ENCODE measurements at regions of chr1 and their contacts with region 1.

Region 1: DNA sequence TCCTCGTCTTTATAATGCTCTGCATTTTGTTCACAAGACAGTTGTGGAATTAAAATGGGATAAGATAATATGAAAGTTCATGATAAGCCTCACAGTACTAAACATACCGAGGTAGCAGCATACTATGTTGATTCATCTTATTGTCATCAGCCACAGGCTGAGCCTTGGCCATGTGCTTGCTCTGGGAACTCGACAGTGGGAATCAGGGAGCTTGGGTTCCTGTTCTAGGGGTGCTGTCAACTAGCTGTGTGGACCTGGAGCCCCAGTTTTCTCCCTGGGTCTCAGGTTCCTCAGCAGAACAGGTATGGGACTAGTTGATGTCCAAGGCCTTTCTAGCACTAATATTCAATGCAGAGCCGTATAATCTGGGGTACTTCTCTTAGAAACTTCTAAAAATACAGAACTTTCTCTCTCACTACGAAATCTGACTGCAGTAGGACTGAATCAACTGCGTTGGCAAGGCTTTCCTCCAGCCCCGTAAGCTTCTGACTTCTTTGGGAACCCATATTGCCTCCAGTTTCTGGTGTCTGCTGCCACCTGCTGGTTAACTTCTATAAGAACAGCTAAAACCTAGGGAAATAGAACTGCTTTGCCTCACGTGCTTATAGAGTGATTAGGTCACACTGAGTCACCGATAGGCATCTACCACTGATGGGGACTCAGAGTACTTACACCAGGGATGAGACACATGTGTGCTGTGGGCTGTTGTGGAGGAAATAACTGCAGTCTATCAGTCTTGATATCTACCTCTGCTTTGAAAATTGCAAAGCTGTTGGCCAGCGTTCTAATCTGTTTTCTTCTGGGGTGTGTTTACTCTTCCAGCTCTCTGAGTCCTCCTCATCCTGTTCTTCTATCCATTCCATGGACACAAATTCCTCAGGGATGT is 110.9 kb downstream of the RGL1 start:
- DNase-seq: peak; percentile 76 to 81
- H3K4me3 ChIP-seq: no peak overlapping the region
- H3K4me1 ChIP-seq: no peaks in the 10 kb centered on the region
- H3K27me3 ChIP-seq: no peaks in the 10 kb centered on the region

Region 2: DNA sequence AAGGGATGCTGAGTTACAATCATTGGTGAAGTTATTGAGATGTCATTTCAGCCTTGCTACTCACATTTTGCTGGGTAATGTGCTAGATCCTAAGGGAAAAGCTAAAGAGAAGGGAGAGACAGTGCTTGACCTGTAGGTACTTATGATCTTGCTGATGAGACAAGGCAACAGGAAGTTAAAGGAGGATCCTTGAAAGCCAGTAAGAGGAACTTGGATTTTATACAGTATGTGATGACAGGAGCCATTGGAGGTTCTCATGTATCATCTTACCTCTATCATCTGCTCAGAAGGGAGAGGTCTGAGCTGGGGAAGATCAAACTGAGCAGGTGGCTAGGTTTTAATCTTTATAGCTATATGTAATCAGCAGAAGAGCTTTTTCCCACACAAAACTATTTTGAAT is 269.1 kb before region 1 on chr1:
- in situ Hi-C with region 1: loop called (anchors 10 kb)
- DNase-seq: no peak
- H3K4me3 ChIP-seq: no peak overlapping the region
- H3K4me1 ChIP-seq: no peaks in the 10 kb centered on the region
- H3K27me3 ChIP-seq: peaks cover 4% of the 10 kb centered on the region; the same call in 1 of the 2 replicates

Measured in HAP-1 (cell line).